ENCODE measurements at regions of chr2 and their contacts with region 1.

Region 1: DNA sequence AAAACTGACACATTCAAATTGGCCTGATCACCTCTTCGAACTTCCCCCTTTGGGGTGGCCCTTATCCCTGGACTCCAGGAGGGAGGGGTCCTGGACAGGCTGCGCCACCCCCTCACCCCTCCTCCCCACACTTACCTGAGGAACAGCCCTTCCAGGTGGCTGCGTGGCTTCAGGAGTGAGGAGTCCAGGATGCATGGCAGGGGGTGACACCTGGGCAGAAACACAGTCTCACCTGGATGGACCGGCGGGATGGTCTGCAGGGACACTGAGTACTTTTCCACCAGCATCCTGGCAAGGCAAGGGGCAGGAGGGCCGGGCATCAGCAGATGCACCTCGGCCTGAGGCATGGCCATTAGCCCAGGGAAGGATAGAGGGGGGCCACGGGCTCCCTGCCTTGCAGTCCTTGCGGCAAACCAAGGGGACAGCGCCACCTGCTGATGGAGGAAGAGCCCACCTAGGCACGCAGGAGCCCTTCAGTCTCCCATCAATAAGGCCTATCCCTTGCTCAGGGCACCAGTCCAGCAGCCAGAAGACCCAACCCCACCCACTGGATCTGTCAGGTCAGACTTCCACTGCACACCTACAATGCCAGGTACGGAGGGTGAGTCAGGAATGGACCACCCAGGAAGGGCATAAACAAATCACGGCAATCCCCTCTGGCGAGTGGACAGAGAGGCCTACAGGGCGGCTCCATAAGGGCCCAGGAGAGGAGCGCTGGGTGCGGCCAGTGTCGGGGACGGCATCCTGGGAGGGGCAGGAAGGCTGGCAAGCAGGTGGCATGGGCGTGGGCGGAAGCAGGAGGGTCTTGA is 26.0 kb downstream of the FAM178B start:
- DNase-seq: peak; percentile 68 to 93 (median 88)
- ATAC-seq: peak; percentile 22
- H3K4me3 ChIP-seq: no peak overlapping the region
- H3K4me3 Mint-ChIP-seq: peak overlapping the region; percentile 32
- H3K27ac ChIP-seq: no peak overlapping the region
- H3K27ac Mint-ChIP-seq: peak overlapping the region; percentile 71
- H3K4me1 ChIP-seq: peaks cover 47% of the 10 kb centered on the region
- H3K4me1 Mint-ChIP-seq: peaks cover 52% of the 10 kb centered on the region
- H3K27me3 ChIP-seq: no peaks in the 10 kb centered on the region
- H3K27me3 Mint-ChIP-seq: no peaks in the 10 kb centered on the region
- CTCF ChIP-seq: peak; percentile 77

Region 2: DNA sequence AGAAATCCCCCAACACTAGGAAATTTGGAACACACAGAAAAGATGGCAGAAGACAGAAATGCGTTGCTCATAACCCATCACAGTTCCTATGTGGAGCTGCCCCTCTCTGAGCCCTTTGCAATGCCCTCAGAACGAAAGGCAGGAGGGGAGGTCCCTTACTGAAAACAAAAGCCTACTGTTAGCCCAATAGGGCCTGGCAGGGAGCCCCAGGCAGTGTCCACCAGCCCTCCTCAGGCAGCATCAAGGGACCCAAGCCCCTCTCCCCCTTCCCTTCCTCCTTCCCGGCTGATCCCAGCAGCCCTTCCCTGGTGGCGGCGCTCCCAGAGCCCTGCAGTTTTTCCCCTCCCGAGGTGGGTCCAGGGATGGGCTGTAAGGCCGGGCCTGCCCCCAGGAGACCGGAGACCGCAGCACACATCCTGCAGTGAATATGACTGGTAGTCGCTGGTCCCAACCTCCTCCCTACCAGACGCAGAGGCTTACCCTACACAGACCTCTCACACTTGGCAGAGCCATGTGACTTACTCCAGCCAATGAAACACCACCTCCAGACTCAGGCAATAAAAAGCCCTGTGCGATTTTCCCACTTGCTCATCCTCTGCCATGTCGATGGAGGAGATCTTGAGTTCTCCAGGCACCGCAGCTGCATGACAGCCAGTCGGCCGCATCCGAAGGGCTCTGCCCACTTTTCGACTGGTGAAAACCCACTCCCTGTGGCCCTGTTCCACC is 795.7 kb before region 1 on chr2:
- CTCF ChIA-PET with region 1: no interaction called
- POLR2A ChIA-PET with region 1: no interaction called
- intact Hi-C with region 1: loop called in 1 of 2 experiments (anchors 10 kb)
- DNase-seq: peak in 6 of 9 experiments; percentile 52 to 91 (median 80)
- ATAC-seq: peak; percentile 72
- H3K4me3 ChIP-seq: peak overlapping the region; percentile 25 to 37
- H3K4me3 Mint-ChIP-seq: peak overlapping the region; percentile 78
- H3K27ac ChIP-seq: peak overlapping the region; percentile 63 to 95
- H3K27ac Mint-ChIP-seq: peak overlapping the region; percentile 98
- H3K4me1 ChIP-seq: peaks cover 47% of the 10 kb centered on the region
- H3K4me1 Mint-ChIP-seq: peaks cover 60% of the 10 kb centered on the region
- H3K27me3 ChIP-seq: no peaks in the 10 kb centered on the region
- H3K27me3 Mint-ChIP-seq: no peaks in the 10 kb centered on the region
- CTCF ChIP-seq: no peak

Region 3: GRCh38 chr2:96625571-96626552 is 334.5 kb before region 1 on chr2:
- CTCF ChIA-PET with region 1: no interaction called
- POLR2A ChIA-PET with region 1: no interaction called
- intact Hi-C with region 1: loop called in 1 of 2 experiments (anchors 5 kb)
- DNase-seq: no peak
- ATAC-seq: no peak
- H3K4me3 ChIP-seq: no peak overlapping the region
- H3K4me3 Mint-ChIP-seq: no peak overlapping the region
- H3K27ac ChIP-seq: no peak overlapping the region
- H3K27ac Mint-ChIP-seq: no peak overlapping the region
- H3K4me1 ChIP-seq: no peaks in the 10 kb centered on the region
- H3K4me1 Mint-ChIP-seq: peaks cover 29% of the 10 kb centered on the region
- H3K27me3 ChIP-seq: no peaks in the 10 kb centered on the region
- H3K27me3 Mint-ChIP-seq: no peaks in the 10 kb centered on the region
- CTCF ChIP-seq: no peak

Region 4: DNA sequence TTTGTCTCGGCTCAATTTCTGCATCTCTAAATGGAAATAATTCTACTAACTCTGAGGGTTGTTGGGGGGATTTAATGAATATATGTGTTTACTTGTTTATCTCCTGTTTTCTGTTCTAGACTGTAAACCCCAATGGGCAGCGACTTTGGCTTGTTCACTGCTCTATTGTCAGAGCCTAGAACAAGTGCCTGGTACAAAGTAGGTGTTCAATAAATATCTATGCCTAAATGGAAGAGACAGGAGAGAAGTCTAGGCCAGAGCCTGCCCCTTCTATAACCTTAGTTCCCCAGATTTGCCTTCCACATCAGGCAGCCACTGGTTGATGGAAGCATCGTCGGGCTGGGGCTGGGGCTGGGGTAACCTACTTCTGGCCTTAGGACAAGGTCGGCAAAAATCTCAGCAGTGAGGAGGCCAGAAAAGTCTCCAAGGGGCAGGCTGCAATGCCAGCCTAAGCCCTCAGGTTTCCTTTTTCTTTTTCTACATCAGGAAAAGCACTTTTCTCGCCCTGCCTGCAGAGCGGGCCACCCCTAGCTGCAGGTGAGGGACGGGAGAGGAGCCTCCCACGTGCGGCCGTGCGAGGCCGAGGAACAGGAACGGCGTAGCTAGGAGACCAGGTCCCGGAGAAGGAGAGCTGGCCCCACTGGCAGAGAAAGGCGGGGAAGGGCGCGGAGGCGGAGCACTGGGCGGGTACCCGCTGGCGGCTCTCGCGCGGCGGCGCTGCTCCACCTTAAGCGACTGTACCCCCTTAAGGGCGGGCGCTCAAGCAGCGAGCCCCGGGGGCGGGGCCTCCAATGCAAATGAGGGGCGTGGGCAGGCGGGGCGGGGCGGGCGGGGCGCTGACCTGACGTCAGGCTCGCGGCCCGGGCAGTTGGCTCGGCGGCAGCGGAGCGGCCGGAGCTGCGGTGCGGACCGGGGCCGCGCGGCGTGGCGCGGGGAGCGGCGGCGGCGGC is 200.0 kb before region 1 on chr2 and contains the start of gene CNNM4:
- CTCF ChIA-PET with region 1: interaction called, 3 read pairs
- POLR2A ChIA-PET with region 1: interaction called, 3 read pairs
- intact Hi-C with region 1: loop called in 1 of 2 experiments (anchors 1 kb)
- DNase-seq: peak; percentile 79 to 95 (median 92)
- ATAC-seq: peak; percentile 94
- H3K4me3 ChIP-seq: peak within 1 kb of the TSS; percentile 67 to 95
- H3K4me3 Mint-ChIP-seq: peak within 1 kb of the TSS; percentile 87
- H3K27ac ChIP-seq: peak within 1 kb of the TSS; percentile 60 to 73
- H3K27ac Mint-ChIP-seq: peak within 1 kb of the TSS; percentile 92
- H3K4me1 ChIP-seq: peaks cover 50% of the 10 kb centered on the region
- H3K4me1 Mint-ChIP-seq: peaks cover 54% of the 10 kb centered on the region
- H3K27me3 ChIP-seq: no peaks in the 10 kb centered on the region
- H3K27me3 Mint-ChIP-seq: no peaks in the 10 kb centered on the region
- CTCF ChIP-seq: no peak
- total RNA-seq, gene CNNM4: 6.7 to 8.3 TPM

Region 5: GRCh38 chr2:96856776-96857673 is 103.3 kb before region 1 on chr2:
- CTCF ChIA-PET with region 1: interaction called, 651 read pairs
- POLR2A ChIA-PET with region 1: interaction called, 42 read pairs
- intact Hi-C with region 1: loop called (anchors 1 kb)
- DNase-seq: peak in 6 of 9 experiments; percentile 37 to 72 (median 44)
- ATAC-seq: no peak
- H3K4me3 ChIP-seq: peak overlapping the region; percentile 83 to 89
- H3K4me3 Mint-ChIP-seq: peak overlapping the region; percentile 87
- H3K27ac ChIP-seq: peak overlapping the region; percentile 65 to 81
- H3K27ac Mint-ChIP-seq: peak overlapping the region; percentile 85
- H3K4me1 ChIP-seq: peaks cover 32% of the 10 kb centered on the region
- H3K4me1 Mint-ChIP-seq: peaks cover 40% of the 10 kb centered on the region
- H3K27me3 ChIP-seq: no peaks in the 10 kb centered on the region
- H3K27me3 Mint-ChIP-seq: no peaks in the 10 kb centered on the region
- CTCF ChIP-seq: no peak

Region 6: GRCh38 chr2:96927405-96928243 is 32.7 kb before region 1 on chr2:
- CTCF ChIA-PET with region 1: interaction called, 5 read pairs
- POLR2A ChIA-PET with region 1: interaction called, 9 read pairs
- intact Hi-C with region 1: loop called in 1 of 2 experiments (anchors 1 kb)
- DNase-seq: no peak
- ATAC-seq: no peak
- H3K4me3 ChIP-seq: no peak overlapping the region
- H3K4me3 Mint-ChIP-seq: no peak overlapping the region
- H3K27ac ChIP-seq: no peak overlapping the region
- H3K27ac Mint-ChIP-seq: no peak overlapping the region
- H3K4me1 ChIP-seq: peaks cover 23% of the 10 kb centered on the region
- H3K4me1 Mint-ChIP-seq: peaks cover 27% of the 10 kb centered on the region
- H3K27me3 ChIP-seq: no peaks in the 10 kb centered on the region
- H3K27me3 Mint-ChIP-seq: no peaks in the 10 kb centered on the region
- CTCF ChIP-seq: no peak

Region 7: DNA sequence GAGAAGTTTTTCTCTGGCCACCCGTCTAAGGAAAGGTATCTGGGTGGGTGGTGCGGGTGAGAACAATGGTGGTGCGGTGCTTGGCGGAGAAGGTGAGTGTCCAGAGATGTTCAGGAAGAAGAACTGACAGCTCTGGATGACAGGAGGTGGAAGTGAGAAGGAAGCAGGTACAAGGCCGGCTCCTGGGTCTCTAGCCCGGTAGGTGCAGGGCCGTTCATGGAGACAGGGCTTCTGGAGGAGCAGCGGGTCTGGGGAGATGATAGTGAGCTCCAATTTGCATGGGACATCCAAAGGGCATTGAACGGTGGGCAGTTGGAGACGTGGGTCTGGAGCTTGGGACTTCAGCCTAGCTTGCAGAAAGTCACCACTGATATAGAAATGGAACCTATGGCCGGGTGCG is 135.3 kb after region 1 on chr2:
- CTCF ChIA-PET with region 1: no interaction called
- POLR2A ChIA-PET with region 1: interaction called, 6 read pairs
- intact Hi-C with region 1: loop called (anchors 5 kb)
- DNase-seq: no peak
- ATAC-seq: no peak
- H3K4me3 ChIP-seq: peak overlapping the region in 1 of 2 experiments; percentile 35
- H3K4me3 Mint-ChIP-seq: peak overlapping the region; percentile 79
- H3K27ac ChIP-seq: no peak overlapping the region
- H3K27ac Mint-ChIP-seq: peak overlapping the region; percentile 43
- H3K4me1 ChIP-seq: peaks cover 8% of the 10 kb centered on the region
- H3K4me1 Mint-ChIP-seq: peaks cover 16% of the 10 kb centered on the region
- H3K27me3 ChIP-seq: peaks cover 0 to 2% of the 10 kb centered on the region in 2 experiments
- H3K27me3 Mint-ChIP-seq: peaks cover 6% of the 10 kb centered on the region
- CTCF ChIP-seq: no peak